ENCODE measurements at regions of chr18 and their contacts with region 1.

Region 1: DNA sequence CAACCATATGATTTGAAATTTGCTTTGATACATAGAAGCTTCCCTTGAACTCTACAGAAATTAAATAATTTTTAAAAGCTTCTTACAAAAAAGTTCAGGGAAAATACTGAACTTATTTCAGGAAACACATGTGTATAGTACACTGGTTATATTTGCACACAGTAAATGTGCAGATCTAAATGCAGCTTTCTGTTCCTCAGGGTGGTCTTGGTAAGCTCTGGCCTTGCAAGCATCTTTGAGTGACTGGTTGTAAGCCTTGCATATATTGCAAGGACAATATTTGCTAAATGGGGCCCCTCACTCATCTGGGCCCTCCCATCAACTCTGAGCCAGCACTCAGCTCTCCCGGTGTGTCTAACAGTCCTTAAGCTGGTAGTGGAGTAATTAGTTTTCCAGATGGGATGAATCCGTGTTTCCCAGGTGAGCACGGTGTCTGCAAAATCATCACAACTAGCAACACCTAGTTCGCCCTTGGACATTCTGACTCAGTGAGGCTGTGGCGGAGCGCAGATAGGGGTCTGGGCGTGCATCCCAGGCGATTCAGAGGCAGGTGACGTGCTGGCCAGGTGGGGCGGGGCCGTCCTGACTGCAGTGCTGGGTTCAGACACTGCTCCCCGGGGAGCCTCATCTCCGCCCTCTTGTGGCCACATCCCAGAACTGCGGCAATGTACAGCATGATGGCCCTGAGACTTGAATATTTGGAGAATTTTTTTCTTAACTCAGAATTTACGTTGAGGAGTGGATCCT is 149.6 kb downstream of the MBP start:
- DNase-seq: peak; percentile 95 to 96
- H3K4me3 ChIP-seq: no peak overlapping the region
- H3K27ac ChIP-seq: no peak overlapping the region
- H3K4me1 ChIP-seq: peaks cover 8 to 51% (median 40%) of the 10 kb centered on the region in 4 donors
- H3K27me3 ChIP-seq: no peaks in the 10 kb centered on the region
- CTCF ChIP-seq: peak in 5 of 7 experiments; percentile 84 to 97 (median 95)
- EP300 ChIP-seq: no peak
- POLR2A ChIP-seq: no peak

Region 2: GRCh38 chr18:76791106-76791505 is 191.9 kb before region 1 on chr18:
- intact Hi-C with region 1: loop called (anchors 10 kb)
- DNase-seq: no peak
- H3K4me3 ChIP-seq: no peak overlapping the region
- H3K27ac ChIP-seq: no peak overlapping the region
- H3K4me1 ChIP-seq: no peaks in the 10 kb centered on the region
- H3K27me3 ChIP-seq: peaks cover 0 to 10% (median 0%) of the 10 kb centered on the region in 3 donors
- CTCF ChIP-seq: no peak
- EP300 ChIP-seq: no peak
- POLR2A ChIP-seq: no peak

Region 3: GRCh38 chr18:76922107-76922506 is 60.9 kb before region 1 on chr18:
- intact Hi-C with region 1: loop called (anchors 10 kb)
- DNase-seq: peak; percentile 70 to 86
- H3K4me3 ChIP-seq: no peak overlapping the region
- H3K27ac ChIP-seq: no peak overlapping the region
- H3K4me1 ChIP-seq: peaks cover 0 to 6% (median 0%) of the 10 kb centered on the region in 4 donors
- H3K27me3 ChIP-seq: no peaks in the 10 kb centered on the region
- CTCF ChIP-seq: peak in 5 of 7 experiments; percentile 38 to 84 (median 63)
- EP300 ChIP-seq: no peak
- POLR2A ChIP-seq: no peak

Region 4: DNA sequence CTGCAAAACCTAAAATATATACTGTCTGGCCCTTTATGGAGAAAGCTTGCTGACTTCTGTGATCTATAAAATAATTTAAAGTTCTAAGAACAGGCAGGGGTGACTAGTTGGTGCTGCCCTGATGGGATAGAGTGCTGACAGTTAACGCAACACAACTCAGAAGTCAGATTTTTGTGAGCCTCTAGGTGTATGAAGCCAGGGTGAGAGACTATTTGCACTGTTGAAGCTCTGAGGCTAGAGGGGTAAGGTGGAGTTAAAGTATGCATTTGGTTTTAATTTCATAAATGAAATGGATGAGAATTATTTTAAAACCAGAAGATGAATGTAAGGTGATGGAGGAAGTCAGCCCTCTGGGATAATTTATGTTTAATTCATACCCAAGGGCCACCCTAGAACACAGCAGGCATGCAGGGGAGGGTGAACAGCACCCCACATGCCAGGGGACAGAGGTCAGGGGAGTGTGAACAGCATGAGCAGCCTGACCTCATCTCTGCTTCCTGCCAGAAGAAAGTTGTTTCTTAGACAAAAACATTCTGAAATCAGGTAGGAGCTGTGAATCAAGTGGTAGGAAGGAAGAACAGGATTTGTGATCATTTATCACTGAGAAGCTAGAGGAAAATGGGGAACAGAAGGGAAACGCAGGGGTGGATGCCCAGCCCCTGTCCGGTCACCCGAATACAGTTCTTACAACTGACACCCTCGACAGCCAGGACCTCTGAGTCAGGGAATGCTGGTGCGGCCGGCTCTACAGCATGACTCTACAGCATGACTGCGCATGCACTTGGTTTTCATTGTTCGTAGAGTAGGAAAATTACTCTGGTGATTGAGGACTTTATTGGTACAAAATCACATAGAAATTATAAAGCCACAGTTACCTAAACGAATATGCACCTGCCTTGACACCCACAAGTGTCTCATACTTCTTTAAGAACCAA is 56.4 kb after region 1 on chr18:
- intact Hi-C with region 1: no loop called
- DNase-seq: no peak
- H3K4me3 ChIP-seq: no peak overlapping the region
- H3K27ac ChIP-seq: no peak overlapping the region
- H3K4me1 ChIP-seq: peaks cover 0 to 29% (median 8%) of the 10 kb centered on the region in 4 donors
- H3K27me3 ChIP-seq: no peaks in the 10 kb centered on the region
- CTCF ChIP-seq: no peak
- EP300 ChIP-seq: no peak
- POLR2A ChIP-seq: no peak

Region 5: GRCh38 chr18:77067291-77068061 is 84.5 kb after region 1 on chr18:
- intact Hi-C with region 1: no loop called
- DNase-seq: peak; percentile 72 to 91
- H3K4me3 ChIP-seq: peak overlapping the region in 1 of 4 donors; percentile 22
- H3K27ac ChIP-seq: peak overlapping the region; percentile 60 to 93 (median 83)
- H3K4me1 ChIP-seq: peaks cover 65 to 97% (median 82%) of the 10 kb centered on the region in 4 donors
- H3K27me3 ChIP-seq: no peaks in the 10 kb centered on the region
- CTCF ChIP-seq: peak in 1 of 7 experiments; percentile 22
- EP300 ChIP-seq: no peak
- POLR2A ChIP-seq: no peak

Measured in stomach (tissue), 19 donors.